ENCODE measurements at regions of chr4 and their contacts with region 1.

Region 1: GRCh38 chr4:119244832-119245231 is 32.3 kb downstream of the USP53 start:
- DNase-seq: no peak
- H3K4me3 ChIP-seq: no peak overlapping the region
- H3K27ac ChIP-seq: no peak overlapping the region
- H3K4me1 ChIP-seq: no peaks in the 10 kb centered on the region
- H3K27me3 ChIP-seq: no peaks in the 10 kb centered on the region
- CTCF ChIP-seq: no peak

Region 2: GRCh38 chr4:118981839-118982381 is 262.9 kb before region 1 on chr4:
- CTCF ChIA-PET with region 1: no interaction called
- POLR2A ChIA-PET with region 1: no interaction called
- intact Hi-C with region 1: no loop called
- DNase-seq: peak; percentile 29 to 45
- H3K4me3 ChIP-seq: no peak overlapping the region
- H3K27ac ChIP-seq: no peak overlapping the region
- H3K4me1 ChIP-seq: no peaks in the 10 kb centered on the region
- H3K27me3 ChIP-seq: no peaks in the 10 kb centered on the region
- CTCF ChIP-seq: peak; percentile 81

Region 3: DNA sequence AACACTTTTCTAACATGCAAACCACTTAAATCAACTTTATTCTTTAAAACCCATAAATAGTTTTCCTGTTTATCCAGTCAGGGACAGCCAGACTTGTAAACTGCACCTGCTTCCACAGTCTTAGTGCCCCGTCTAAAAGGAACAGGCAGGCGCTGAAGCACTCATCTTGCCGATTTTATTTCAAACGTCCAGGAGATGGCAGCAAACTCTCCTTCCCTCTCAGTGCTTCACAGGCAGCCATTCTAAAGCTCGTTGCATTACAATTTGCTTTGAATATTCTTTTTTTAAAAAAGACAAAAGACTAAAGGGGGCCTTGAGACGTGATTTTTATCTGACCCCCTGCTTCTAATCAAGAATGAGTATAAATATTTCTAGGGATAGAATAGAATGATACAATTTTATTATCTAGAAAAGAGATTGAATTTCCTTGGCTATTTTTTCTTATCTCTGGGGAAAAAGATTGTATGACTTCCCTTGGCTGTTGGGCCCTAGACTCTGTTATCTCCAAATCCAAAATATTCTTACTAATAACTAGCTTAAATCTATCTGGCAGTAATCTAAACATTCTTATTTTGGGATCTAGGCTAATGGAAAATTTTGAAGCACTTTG is 202.8 kb before region 1 on chr4:
- CTCF ChIA-PET with region 1: no interaction called
- POLR2A ChIA-PET with region 1: no interaction called
- intact Hi-C with region 1: loop called (anchors 10 kb)
- DNase-seq: peak; percentile 14 to 40
- H3K4me3 ChIP-seq: no peak overlapping the region
- H3K27ac ChIP-seq: no peak overlapping the region
- H3K4me1 ChIP-seq: no peaks in the 10 kb centered on the region
- H3K27me3 ChIP-seq: no peaks in the 10 kb centered on the region
- CTCF ChIP-seq: peak; percentile 69

Region 4: DNA sequence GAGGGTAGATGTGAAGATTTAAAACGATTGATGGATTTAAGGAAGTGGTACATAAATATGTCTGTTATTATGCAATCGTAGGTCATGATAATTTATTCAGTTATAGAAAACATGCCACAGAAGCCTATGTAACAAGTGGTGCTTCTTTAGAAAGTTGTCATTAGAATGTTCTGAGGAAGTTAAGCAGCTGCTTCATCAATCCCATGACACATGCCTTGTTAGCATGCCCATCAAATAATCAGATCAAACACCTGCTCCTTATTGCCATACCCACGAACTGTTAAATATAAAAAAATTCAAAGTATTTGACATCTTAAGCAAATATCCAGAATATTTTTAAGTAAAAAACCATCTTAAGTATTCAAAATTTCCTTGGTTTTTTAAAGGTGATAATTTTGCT is 185.6 kb before region 1 on chr4:
- CTCF ChIA-PET with region 1: no interaction called
- POLR2A ChIA-PET with region 1: no interaction called
- intact Hi-C with region 1: no loop called
- DNase-seq: no peak
- H3K4me3 ChIP-seq: no peak overlapping the region
- H3K27ac ChIP-seq: no peak overlapping the region
- H3K4me1 ChIP-seq: no peaks in the 10 kb centered on the region
- H3K27me3 ChIP-seq: no peaks in the 10 kb centered on the region
- CTCF ChIP-seq: no peak